ENCODE measurements at regions of chr5 and their contacts with region 1.

Region 1: DNA sequence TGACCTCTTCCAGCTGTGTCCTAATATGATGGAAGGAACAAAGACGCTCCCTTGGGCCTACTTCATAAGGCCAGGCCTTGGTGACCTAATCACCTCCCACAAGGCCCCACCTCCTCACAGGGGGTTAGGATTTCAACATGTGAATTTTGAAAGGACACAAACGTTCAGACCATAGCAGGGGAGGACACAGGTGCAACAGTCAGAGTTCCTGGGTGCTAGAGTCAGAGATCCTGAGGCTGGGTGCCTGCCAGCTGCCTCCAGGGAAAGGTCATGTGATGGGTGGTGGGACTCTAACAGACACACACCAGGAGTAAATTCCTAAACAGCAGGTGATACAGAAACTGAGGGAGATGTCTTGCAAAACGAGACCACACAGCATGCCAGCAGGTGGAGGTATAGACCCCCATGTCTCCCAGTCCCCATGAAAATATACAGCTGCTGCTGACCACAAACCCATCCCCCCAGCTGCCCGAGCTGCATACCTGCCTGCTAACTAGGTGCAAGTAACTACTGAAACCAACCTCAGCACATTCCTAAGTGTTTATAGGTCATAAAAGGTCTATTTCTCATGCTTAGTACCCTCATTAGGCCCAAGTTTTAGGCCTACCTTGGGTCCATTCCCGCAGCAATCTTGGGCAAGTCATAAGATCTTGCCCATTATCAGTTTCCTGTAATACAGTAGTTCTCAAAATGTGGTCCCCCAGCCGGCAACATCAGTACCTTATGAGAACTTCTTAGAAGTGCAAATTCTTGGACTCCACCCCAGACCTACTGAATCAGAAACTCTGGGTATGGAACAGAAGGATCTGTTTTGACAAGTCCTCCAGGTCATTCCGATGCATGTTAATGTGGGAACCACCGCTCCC is 245.4 kb downstream of the ENC1 start:
- DNase-seq: no peak
- ATAC-seq: no peak
- H3K4me3 Mint-ChIP-seq: no peak overlapping the region
- H3K27ac Mint-ChIP-seq: no peak overlapping the region
- H3K4me1 Mint-ChIP-seq: peaks cover 7% of the 10 kb centered on the region
- H3K27me3 Mint-ChIP-seq: no peaks in the 10 kb centered on the region

Region 2: GRCh38 chr5:73312146-73312871 is 1082.8 kb before region 1 on chr5:
- CTCF ChIA-PET with region 1: no interaction called
- POLR2A ChIA-PET with region 1: no interaction called
- intact Hi-C with region 1: no loop called
- DNase-seq: peak; percentile 49
- ATAC-seq: peak; percentile 51
- H3K4me3 Mint-ChIP-seq: no peak overlapping the region
- H3K27ac Mint-ChIP-seq: no peak overlapping the region
- H3K4me1 Mint-ChIP-seq: peaks cover 6% of the 10 kb centered on the region
- H3K27me3 Mint-ChIP-seq: peaks cover 68% of the 10 kb centered on the region

Region 3: GRCh38 chr5:73902327-73903051 is 492.7 kb before region 1 on chr5:
- CTCF ChIA-PET with region 1: no interaction called
- POLR2A ChIA-PET with region 1: no interaction called
- intact Hi-C with region 1: loop called in 1 of 2 experiments (anchors 2 kb)
- DNase-seq: no peak
- ATAC-seq: no peak
- H3K4me3 Mint-ChIP-seq: no peak overlapping the region
- H3K27ac Mint-ChIP-seq: no peak overlapping the region
- H3K4me1 Mint-ChIP-seq: peaks cover 7% of the 10 kb centered on the region
- H3K27me3 Mint-ChIP-seq: peaks cover 18% of the 10 kb centered on the region

Region 4: GRCh38 chr5:74530326-74531050 is 135.3 kb after region 1 on chr5:
- CTCF ChIA-PET with region 1: no interaction called
- POLR2A ChIA-PET with region 1: no interaction called
- intact Hi-C with region 1: no loop called
- DNase-seq: no peak
- ATAC-seq: no peak
- H3K4me3 Mint-ChIP-seq: no peak overlapping the region
- H3K27ac Mint-ChIP-seq: no peak overlapping the region
- H3K4me1 Mint-ChIP-seq: no peaks in the 10 kb centered on the region
- H3K27me3 Mint-ChIP-seq: peaks cover 2% of the 10 kb centered on the region